ENCODE measurements at regions of chr1 and their contacts with region 1.

Region 1: DNA sequence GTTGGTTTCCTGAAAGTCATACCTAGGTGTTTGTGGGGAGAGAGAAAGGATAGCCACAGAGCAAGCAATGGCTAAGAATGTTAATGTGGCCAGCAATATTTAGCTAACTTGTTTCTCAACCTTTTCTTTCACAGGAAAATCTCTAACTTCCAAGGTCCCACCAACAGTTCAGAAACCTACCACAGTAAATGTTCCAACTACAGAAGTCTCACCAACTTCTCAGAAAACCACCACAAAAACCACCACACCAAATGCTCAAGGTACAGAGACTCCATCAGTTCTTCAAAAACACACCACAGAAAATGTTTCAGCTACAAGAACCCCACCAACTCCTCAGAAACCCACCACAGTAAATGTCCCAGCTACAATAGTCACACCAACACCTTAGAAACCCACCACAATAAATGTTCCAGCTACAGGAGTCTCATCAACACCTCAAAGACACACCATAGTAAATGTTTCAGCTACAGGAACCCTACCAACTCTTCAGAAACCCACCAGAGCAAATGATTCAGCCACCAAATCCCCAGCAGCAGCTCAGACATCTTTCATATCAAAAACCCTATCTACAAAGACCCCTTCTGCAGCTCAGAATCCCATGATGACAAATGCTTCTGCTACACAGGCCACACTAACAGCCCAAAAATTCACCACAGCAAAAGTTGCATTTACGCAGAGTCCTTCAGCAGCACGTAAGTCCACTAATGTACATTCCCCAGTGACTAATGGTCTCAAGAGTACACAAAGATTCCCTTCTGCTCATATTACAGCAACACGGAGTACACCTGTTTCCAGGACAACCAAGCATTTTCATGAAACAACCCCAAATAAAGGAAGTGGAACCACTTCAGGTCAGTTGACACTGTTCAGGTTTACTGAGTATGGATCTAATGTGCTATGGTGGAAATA is 15.3 kb downstream of the CD55 start:
- DNase-seq: peak; percentile 79 to 98 (median 85)
- H3K4me3 ChIP-seq: peak overlapping the region in 1 of 3 experiments; percentile 50
- H3K4me3 Mint-ChIP-seq: peak overlapping the region; percentile 53 to 65
- H3K27ac ChIP-seq: peak overlapping the region in 1 of 2 donors; percentile 95
- H3K27ac Mint-ChIP-seq: peak overlapping the region; percentile 92 to 98 (median 96)
- H3K4me1 ChIP-seq: peaks cover 38 to 50% of the 10 kb centered on the region in 2 donors
- H3K4me1 Mint-ChIP-seq: peaks cover 58% of the 10 kb centered on the region
- H3K27me3 ChIP-seq: no peaks in the 10 kb centered on the region
- H3K27me3 Mint-ChIP-seq: no peaks in the 10 kb centered on the region
- CTCF ChIP-seq: no peak

Region 2: DNA sequence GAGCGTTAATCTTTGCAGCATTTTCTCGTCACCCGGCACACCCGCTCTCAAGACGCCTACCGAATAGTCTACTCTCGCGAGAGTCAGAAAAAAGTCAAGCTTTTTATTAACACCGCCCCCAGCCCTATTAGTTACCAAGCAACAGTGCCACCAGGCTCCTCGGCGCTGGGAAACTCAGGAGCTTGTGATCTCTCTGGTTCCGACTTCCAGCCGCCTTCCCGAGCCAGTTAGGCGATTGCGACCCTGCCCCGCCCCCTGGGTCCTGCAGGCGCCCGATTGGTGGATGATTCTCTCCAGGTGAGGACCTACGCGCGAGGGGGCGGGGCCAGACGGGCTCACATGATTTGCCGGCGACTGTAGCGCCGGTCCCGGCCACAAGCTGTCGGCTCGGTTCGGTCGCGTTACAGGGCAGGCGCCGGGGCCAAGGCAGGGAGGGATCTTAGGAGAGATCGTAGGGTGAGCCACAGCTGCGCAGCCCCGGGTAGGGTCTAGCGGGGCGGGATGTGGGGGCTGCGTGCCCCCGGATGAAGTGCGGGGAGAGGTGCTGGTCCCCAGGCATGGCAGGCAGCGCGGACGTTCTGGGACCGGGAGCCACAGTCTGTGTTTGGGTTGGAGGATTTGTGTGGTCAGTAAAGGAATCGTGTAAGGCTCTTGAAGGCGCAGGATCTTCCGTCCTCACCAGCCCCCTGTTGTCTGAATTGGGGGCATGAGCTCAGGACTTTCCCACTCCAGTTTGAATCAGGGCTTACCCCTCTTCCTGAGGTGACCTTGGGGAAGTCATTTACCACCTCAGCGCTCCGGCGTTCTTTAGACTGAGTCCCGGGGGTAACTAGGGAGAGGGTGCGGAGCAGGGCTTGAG is 283.7 kb before region 1 on chr1 and contains the start of gene PFKFB2:
- intact Hi-C with region 1: loop called in 1 of 2 experiments (anchors 10 kb)
- DNase-seq: peak; percentile 81 to 85 (median 83)
- H3K4me3 ChIP-seq: peak within 1 kb of the TSS; percentile 63 to 84 (median 66)
- H3K4me3 Mint-ChIP-seq: peak within 1 kb of the TSS; percentile 93 to 97
- H3K27ac ChIP-seq: peak within 1 kb of the TSS; percentile 76 to 79
- H3K27ac Mint-ChIP-seq: peak within 1 kb of the TSS; percentile 85 to 95 (median 91)
- H3K4me1 ChIP-seq: peaks cover 35 to 48% of the 10 kb centered on the region in 2 donors
- H3K4me1 Mint-ChIP-seq: peaks cover 48% of the 10 kb centered on the region
- H3K27me3 ChIP-seq: no peaks in the 10 kb centered on the region
- H3K27me3 Mint-ChIP-seq: peaks cover 0 to 6% (median 0%) of the 10 kb centered on the region in 3 donors
- CTCF ChIP-seq: no peak
- polyA plus RNA-seq, gene PFKFB2: 2.1 to 6.9 (median 2.3) TPM